ENCODE measurements at regions of chrX and their contacts with region 1.

Region 1: GRCh38 chrX:41209853-41210252 is 124.1 kb upstream of the DDX3X start:
- H3K4me3 Mint-ChIP-seq: no peak overlapping the region
- H3K27ac Mint-ChIP-seq: no peak overlapping the region
- H3K4me1 Mint-ChIP-seq: no peaks in the 10 kb centered on the region
- H3K27me3 Mint-ChIP-seq: no peaks in the 10 kb centered on the region

Region 2: DNA sequence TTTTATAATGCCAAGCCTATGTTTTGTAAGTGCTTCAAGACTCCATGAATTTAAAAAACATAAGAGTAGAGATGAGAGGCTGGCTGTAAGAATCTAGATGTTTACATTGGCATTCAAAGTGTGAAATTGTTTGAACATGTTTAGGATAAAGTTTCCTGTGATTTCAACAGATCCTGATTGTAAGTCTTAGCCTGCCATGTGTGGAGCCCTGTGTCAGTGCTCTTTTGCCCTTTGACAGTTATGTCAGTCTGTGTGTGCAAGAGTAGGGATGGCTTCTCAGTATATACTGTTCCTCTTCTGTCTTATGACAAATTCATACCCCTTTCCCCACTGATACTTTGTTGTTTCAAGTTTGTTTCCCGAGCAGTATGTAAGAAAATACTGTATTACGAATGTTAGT is 56.4 kb before region 1 on chrX:
- intact Hi-C with region 1: loop called (anchors 10 kb)
- H3K4me3 Mint-ChIP-seq: no peak overlapping the region
- H3K27ac Mint-ChIP-seq: no peak overlapping the region
- H3K4me1 Mint-ChIP-seq: no peaks in the 10 kb centered on the region
- H3K27me3 Mint-ChIP-seq: no peaks in the 10 kb centered on the region

Region 3: GRCh38 chrX:41288641-41289040 is 78.8 kb after region 1 on chrX:
- intact Hi-C with region 1: no loop called
- H3K4me3 Mint-ChIP-seq: no peak overlapping the region
- H3K27ac Mint-ChIP-seq: no peak overlapping the region
- H3K4me1 Mint-ChIP-seq: no peaks in the 10 kb centered on the region
- H3K27me3 Mint-ChIP-seq: no peaks in the 10 kb centered on the region

Region 4: GRCh38 chrX:41406211-41406610 is 196.4 kb after region 1 on chrX:
- intact Hi-C with region 1: no loop called
- H3K4me3 Mint-ChIP-seq: no peak overlapping the region
- H3K27ac Mint-ChIP-seq: no peak overlapping the region
- H3K4me1 Mint-ChIP-seq: no peaks in the 10 kb centered on the region
- H3K27me3 Mint-ChIP-seq: no peaks in the 10 kb centered on the region

Region 5: GRCh38 chrX:41512394-41512793 is 302.5 kb after region 1 on chrX:
- intact Hi-C with region 1: no loop called
- H3K4me3 Mint-ChIP-seq: no peak overlapping the region
- H3K27ac Mint-ChIP-seq: no peak overlapping the region
- H3K4me1 Mint-ChIP-seq: no peaks in the 10 kb centered on the region
- H3K27me3 Mint-ChIP-seq: no peaks in the 10 kb centered on the region

Measured in dendritic cell treated with granulocyte-macrophage colony-stimulating factor and Interleukin-4, amounts not matched to agents 40 ng/mL and 50 ng/mL, for 4 days (primary cell).